ENCODE measurements at regions of chr11 and their contacts with region 1.

Region 1: GRCh38 chr11:102047305-102047924 is at the start of gene CFAP300:
- DNase-seq: peak; percentile 96 to 99
- ATAC-seq: peak; percentile 96
- H3K4me3 ChIP-seq: peak within 1 kb of the TSS; percentile 56 to 86
- H3K27ac ChIP-seq: peak within 1 kb of the TSS; percentile 3 to 87
- H3K4me1 ChIP-seq: no peaks in the 10 kb centered on the region
- H3K27me3 ChIP-seq: no peaks in the 10 kb centered on the region
- total RNA-seq, gene CFAP300: 3.2 to 5.4 TPM

Region 2: DNA sequence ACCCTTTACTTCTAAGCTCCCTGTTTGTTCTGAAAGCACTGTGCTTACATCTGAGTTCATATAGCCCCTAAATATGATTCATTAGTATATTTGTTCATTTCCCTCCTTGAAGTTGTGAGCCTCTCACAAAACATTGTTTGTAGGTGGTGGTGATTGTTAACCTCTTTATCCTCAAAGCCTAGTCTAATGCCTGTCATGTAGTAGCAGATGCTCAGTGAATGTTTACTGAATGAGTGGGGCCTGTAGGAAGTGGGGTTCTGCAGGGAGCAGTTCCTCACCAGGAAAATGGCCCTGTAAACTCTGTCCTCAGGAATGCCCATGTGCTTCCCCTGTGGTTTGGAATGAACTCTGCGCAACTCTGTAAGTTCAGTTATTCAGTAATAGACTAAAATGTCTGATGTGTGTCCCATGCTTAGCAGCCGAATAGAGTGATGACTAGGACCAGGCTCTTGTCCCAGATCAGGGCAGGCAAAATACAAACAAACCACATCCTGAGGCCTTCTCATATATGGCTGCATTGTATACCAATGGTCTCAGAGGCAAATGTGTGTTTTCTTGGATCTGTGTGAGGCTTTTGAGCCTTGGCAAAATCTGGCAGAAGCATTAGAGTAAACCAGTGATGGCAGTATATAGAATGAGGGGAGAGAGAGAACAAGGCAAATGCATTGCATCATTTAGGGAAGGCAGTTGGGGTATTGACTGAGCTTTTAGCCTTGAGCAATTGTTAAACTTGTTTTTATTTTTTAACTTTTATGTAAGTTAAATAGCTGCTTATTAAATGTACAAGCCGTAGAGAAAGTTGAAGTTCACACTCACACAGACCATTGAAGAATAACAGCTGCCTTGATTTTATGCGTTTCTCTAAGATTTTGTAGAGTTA is 178.5 kb after region 1 on chr11:
- intact Hi-C with region 1: loop called in 1 of 2 experiments (anchors 10 kb)
- DNase-seq: no peak
- ATAC-seq: no peak
- H3K4me3 ChIP-seq: no peak overlapping the region
- H3K27ac ChIP-seq: peak overlapping the region in 1 of 2 donors; percentile 54
- H3K4me1 ChIP-seq: peaks cover 5 to 10% of the 10 kb centered on the region in 2 donors
- H3K27me3 ChIP-seq: no peaks in the 10 kb centered on the region